ENCODE measurements at regions of chr17 and their contacts with region 1.

Region 1: DNA sequence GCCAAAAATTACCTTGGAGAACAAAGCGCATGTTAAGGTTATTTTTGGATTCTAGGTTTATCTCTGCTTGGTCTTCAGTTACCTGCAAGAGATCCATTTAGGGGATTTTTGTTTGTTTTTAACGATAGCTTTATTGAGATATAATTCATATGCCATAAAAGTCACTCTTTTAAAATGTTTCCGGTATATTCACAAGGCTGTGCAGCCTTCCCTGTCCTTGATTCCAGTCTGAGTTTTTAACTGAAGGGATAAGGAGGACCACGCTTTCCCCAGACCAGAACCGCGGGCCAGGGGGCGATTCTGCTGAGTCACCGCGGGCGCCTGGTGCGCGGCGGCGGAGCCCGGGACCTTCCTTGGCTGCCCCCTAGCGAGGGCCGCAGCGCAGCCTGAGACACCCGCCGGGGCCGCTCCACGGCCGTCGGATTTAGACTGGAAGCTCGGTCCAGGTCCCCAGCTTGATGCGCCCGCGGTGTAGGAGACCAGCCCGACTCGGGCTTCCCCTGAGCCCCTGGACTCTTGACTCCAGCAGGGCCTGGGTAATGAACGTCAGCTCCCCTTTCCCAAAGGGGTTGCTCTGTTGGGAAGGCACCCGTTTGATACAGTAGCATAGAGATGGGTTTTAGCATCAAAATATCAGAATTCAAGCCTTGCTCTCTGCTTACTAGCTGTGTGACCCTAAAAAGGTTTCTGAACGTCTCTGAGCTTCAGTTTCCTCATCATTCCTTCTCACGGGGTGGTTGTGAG is 50.0 kb upstream of the STH start:
- DNase-seq: peak; percentile 45
- H3K4me3 Mint-ChIP-seq: peak overlapping the region; percentile 30
- H3K27ac Mint-ChIP-seq: no peak overlapping the region
- H3K4me1 Mint-ChIP-seq: peaks cover 3% of the 10 kb centered on the region
- H3K27me3 Mint-ChIP-seq: peaks cover 36% of the 10 kb centered on the region

Region 2: GRCh38 chr17:45740553-45741330 is 208.3 kb before region 1 on chr17:
- intact Hi-C with region 1: no loop called
- DNase-seq: peak; percentile 18
- H3K4me3 Mint-ChIP-seq: no peak overlapping the region
- H3K27ac Mint-ChIP-seq: no peak overlapping the region
- H3K4me1 Mint-ChIP-seq: no peaks in the 10 kb centered on the region
- H3K27me3 Mint-ChIP-seq: peaks cover 29% of the 10 kb centered on the region

Region 3: GRCh38 chr17:45852535-45853297 is 96.3 kb before region 1 on chr17:
- intact Hi-C with region 1: loop called (anchors 5 kb)
- DNase-seq: peak; percentile 26
- H3K4me3 Mint-ChIP-seq: no peak overlapping the region
- H3K27ac Mint-ChIP-seq: no peak overlapping the region
- H3K4me1 Mint-ChIP-seq: peaks cover 2% of the 10 kb centered on the region
- H3K27me3 Mint-ChIP-seq: peaks cover 14% of the 10 kb centered on the region

Region 4: DNA sequence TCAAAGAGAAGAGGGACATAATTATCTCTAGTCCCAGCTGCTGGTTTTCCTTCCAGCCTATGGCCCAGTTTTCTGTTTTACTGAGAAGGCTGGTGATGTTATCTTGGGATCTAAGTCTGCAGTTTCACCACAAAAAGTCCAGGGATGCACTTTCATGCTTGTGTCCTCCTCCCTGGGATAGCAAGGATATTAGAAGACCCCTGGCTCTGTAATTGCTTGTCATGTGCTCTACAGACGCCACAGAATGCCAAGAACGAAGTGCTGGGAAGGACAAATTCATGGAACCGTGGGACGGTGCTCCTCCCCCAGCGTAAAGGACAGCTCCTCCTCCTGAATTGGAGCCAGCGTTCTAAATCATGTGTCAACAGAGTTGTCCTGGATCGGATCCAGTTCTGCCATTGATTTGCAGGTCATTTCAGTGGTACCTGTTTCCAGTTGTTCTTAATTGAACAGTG is 46.1 kb before region 1 on chr17:
- intact Hi-C with region 1: loop called (anchors 5 kb)
- DNase-seq: no peak
- H3K4me3 Mint-ChIP-seq: no peak overlapping the region
- H3K27ac Mint-ChIP-seq: no peak overlapping the region
- H3K4me1 Mint-ChIP-seq: peaks cover 17% of the 10 kb centered on the region
- H3K27me3 Mint-ChIP-seq: peaks cover 35% of the 10 kb centered on the region

Measured in activated T-helper 2 cell treated with anti-CD3 and anti-CD28 coated beads, Interferon-gamma antibody, Interleukin-2, Interleukin-4, amounts not matched to agents 10 μg/mL and 5 μg/mL and 100 μg/mL, durations not matched to agents 14 hours and 24 hours and 36 hours (primary cell).